Activated T-helper 2 cell treated with anti-CD3 and anti-CD28 coated beads, Interferon-gamma antibody, Interleukin-2, Interleukin-4, amounts not matched to agents 10 μg/mL and 5 μg/mL and 100 μg/mL, durations not matched to agents 14 hours and 24 hours and 36 hours (primary cell): ENCODE measurements at regions of chr1 and their contacts with region 1.

Region 1: DNA sequence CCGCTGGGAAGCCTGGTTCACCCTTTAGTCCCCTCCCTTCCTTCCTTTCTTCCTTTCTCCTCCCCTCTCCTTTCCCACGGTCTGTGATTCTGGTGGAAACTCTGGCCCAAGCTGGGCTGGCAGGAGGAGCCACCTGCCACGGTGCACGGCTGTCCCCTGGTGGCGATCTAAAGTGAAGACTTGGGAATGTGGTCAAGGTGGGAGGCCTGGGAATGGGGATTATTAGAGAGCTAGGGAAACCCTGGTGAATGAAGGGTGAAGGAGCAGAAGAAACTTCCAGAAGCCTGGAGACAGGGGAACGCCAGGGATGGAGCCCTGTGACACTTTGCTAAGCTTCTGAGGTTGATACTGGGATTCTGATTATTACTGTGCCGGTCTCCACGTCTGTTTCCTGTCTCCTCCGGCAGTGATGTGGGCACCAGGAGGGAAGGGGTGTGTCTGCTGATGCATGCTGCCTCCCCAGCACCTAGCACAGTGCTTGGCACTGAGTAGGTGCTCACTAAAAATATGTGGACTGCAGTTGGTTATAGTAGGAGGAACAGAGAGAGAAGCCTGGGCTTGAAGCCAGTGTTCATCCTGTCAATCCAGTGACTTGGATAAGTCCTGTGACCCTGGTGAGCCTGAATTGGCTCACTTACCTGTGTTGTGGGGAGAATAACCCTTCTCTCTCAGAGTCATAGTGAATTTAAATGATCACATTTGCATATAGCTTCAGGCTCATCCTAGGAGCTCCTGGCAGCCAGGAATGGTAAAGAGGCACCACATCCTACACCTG is 71.2 kb upstream of the NBPF3 start:
- DNase-seq: no peak
- H3K4me3 Mint-ChIP-seq: no peak overlapping the region
- H3K27ac Mint-ChIP-seq: no peak overlapping the region
- H3K4me1 Mint-ChIP-seq: peaks cover 7% of the 10 kb centered on the region
- H3K27me3 Mint-ChIP-seq: peaks cover 2% of the 10 kb centered on the region

Region 2: GRCh38 chr1:21216835-21217811 is 151.6 kb before region 1 on chr1:
- intact Hi-C with region 1: loop called (anchors 5 kb)
- DNase-seq: peak; percentile 48
- H3K4me3 Mint-ChIP-seq: no peak overlapping the region
- H3K27ac Mint-ChIP-seq: no peak overlapping the region
- H3K4me1 Mint-ChIP-seq: no peaks in the 10 kb centered on the region
- H3K27me3 Mint-ChIP-seq: peaks cover under 1% of the 10 kb centered on the region

Region 3: DNA sequence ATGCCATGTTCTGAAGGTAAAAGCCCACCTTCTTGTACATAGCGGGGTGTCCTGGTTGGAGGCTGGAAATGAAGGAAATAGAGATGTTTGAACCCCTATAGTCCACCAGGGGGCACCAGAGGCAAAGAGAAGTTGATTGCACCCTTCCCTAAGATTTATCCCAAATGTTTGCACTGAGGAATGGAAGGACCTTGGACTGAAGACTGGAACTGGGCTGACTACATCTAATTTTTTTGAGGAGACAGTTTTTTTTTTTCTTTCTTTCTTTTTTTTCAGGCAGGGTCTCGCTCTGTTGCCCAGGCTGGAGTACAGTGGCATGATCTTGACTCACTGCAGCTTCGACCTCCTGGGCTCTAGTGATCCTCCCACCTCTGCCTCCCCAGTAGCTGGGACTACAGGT is 136.7 kb before region 1 on chr1:
- intact Hi-C with region 1: loop called (anchors 1 kb)
- DNase-seq: no peak
- H3K4me3 Mint-ChIP-seq: no peak overlapping the region
- H3K27ac Mint-ChIP-seq: no peak overlapping the region
- H3K4me1 Mint-ChIP-seq: no peaks in the 10 kb centered on the region
- H3K27me3 Mint-ChIP-seq: no peaks in the 10 kb centered on the region

Region 4: GRCh38 chr1:21255278-21255942 is 113.3 kb before region 1 on chr1:
- intact Hi-C with region 1: loop called (anchors 1 kb)
- DNase-seq: peak; percentile 64
- H3K4me3 Mint-ChIP-seq: no peak overlapping the region
- H3K27ac Mint-ChIP-seq: peak overlapping the region; percentile 71
- H3K4me1 Mint-ChIP-seq: peaks cover 37% of the 10 kb centered on the region
- H3K27me3 Mint-ChIP-seq: no peaks in the 10 kb centered on the region

Region 5: DNA sequence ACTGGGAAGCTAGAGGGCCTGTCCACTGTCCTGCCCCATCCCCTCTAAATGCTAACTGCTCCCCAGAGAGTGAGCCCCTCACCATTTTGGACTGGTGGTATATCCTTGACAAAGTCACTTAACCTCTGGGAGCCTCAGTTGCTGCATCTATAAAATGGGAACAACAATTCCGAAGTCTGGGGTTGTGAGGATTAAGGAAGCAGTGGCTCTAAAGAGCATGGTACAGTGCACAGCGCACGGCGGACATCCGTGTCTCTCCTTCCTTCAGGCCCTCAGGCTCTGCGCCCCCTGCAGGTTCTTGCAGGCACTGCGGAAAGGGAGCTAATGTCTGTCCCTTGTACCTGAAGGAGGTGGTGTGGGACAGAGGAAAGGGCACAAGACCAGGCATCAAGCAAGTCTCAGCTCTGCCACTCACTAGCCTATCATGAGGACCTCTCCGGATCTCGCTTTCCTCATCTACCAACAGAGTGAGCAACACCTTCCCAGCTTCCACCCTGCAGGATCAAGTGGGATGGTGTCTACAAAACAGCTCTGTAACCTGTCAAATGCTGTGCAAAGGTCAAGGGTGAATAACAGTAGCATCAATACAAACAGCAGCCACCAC is 98.5 kb before region 1 on chr1:
- intact Hi-C with region 1: loop called (anchors 5 kb)
- DNase-seq: peak; percentile 68
- H3K4me3 Mint-ChIP-seq: no peak overlapping the region
- H3K27ac Mint-ChIP-seq: no peak overlapping the region
- H3K4me1 Mint-ChIP-seq: peaks cover 12% of the 10 kb centered on the region
- H3K27me3 Mint-ChIP-seq: no peaks in the 10 kb centered on the region